Heart left ventricle (tissue), 16 donors: ENCODE measurements at regions of chr11 and their contacts with region 1.

Region 1: GRCh38 chr11:122853971-122854446 is 15.7 kb downstream of the CRTAM start:
- DNase-seq: peak in 2 of 5 donors; percentile 45 to 51
- ATAC-seq: no peak
- H3K4me3 ChIP-seq: no peak overlapping the region
- H3K27ac ChIP-seq: no peak overlapping the region
- H3K4me1 ChIP-seq: peaks cover 0 to 18% (median 0%) of the 10 kb centered on the region in 12 donors
- H3K27me3 ChIP-seq: peaks cover 0 to 14% (median 0%) of the 10 kb centered on the region in 9 donors
- CTCF ChIP-seq: peak; percentile 65 to 84 (median 78)
- POLR2A ChIP-seq: no peak

Region 2: DNA sequence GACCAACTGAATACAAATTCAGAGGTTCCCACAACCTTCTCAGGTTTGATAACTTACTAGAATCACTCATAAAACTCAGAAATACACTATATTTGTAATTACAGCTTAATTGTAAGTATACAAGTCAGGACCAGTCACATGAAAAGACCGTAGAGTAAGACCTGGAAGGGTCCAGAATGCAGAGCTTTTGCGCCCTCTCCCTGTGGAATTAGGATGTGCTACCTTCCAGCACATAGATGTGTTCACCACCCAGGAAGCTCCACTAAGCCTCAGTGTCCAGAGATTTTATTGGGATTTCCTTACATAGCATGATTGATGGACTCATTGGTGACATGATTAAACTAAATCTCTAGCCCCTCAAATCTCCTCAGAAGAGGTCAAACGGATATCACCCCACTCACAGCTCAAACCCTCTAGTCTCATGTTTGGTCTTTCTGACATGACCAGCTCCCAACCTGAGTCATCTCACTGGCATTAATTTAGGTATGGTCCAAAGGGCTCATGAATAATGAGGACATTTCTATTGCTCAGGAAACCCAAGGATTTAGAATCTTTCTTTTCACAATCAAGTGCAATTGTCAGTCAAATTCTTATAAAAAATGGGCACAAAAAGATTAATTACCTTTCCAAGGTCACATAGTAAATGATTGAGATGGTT is 275.7 kb before region 1 on chr11:
- intact Hi-C with region 1: loop called in 7 of 10 experiments (anchors 2 to 5 kb)
- DNase-seq: no peak
- ATAC-seq: no peak
- H3K4me3 ChIP-seq: no peak overlapping the region
- H3K27ac ChIP-seq: no peak overlapping the region
- H3K4me1 ChIP-seq: peaks cover 0 to 5% (median 0%) of the 10 kb centered on the region in 12 donors
- H3K27me3 ChIP-seq: no peaks in the 10 kb centered on the region
- CTCF ChIP-seq: no peak
- POLR2A ChIP-seq: no peak

Region 3: GRCh38 chr11:122584670-122585069 is 269.3 kb before region 1 on chr11:
- intact Hi-C with region 1: loop called in 7 of 10 experiments (anchors 2 to 5 kb)
- DNase-seq: no peak
- ATAC-seq: no peak
- H3K4me3 ChIP-seq: no peak overlapping the region
- H3K27ac ChIP-seq: no peak overlapping the region
- H3K4me1 ChIP-seq: peaks cover 0 to 5% (median 0%) of the 10 kb centered on the region in 12 donors
- H3K27me3 ChIP-seq: peaks cover 0 to 3% (median 0%) of the 10 kb centered on the region in 9 donors
- CTCF ChIP-seq: no peak
- POLR2A ChIP-seq: no peak

Region 4: DNA sequence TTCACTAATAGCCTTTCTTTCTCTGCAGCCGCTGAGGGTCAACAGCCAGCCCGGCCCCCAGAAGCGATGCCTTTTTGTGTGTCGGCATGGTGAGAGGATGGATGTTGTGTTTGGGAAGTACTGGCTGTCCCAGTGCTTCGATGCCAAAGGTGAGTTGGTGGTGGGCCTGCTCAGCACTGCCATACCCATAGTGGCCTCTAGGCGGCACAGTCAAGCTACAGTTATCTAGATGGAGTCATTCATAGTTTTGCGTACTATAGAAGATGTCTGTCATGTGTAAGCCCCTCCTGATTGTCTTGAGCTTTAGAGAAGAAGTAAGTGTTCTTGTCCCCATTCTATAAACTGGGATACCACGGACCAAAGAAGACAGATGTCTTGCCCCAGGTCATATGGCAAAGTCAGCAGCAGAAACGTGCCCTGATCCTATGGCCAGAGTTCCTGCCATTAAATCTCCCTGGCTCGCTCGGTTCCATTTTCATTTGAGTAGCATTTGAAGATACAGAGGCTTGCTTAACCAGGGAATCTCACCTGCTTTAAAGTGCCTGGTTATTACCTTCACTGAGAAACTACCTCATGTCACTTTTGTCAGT is 57.8 kb before region 1 on chr11:
- intact Hi-C with region 1: loop called (anchors 1 to 5 kb)
- DNase-seq: peak in 4 of 5 donors; percentile 27 to 46 (median 37)
- ATAC-seq: peak in 2 of 4 donors; percentile 62 to 64
- H3K4me3 ChIP-seq: no peak overlapping the region
- H3K27ac ChIP-seq: no peak overlapping the region
- H3K4me1 ChIP-seq: peaks cover 0 to 10% (median 0%) of the 10 kb centered on the region in 12 donors
- H3K27me3 ChIP-seq: no peaks in the 10 kb centered on the region
- CTCF ChIP-seq: peak; percentile 68 to 84 (median 79)
- POLR2A ChIP-seq: no peak